GM12878 (cell line): ENCODE measurements at regions of chr2 and their contacts with region 1.

Region 1: DNA sequence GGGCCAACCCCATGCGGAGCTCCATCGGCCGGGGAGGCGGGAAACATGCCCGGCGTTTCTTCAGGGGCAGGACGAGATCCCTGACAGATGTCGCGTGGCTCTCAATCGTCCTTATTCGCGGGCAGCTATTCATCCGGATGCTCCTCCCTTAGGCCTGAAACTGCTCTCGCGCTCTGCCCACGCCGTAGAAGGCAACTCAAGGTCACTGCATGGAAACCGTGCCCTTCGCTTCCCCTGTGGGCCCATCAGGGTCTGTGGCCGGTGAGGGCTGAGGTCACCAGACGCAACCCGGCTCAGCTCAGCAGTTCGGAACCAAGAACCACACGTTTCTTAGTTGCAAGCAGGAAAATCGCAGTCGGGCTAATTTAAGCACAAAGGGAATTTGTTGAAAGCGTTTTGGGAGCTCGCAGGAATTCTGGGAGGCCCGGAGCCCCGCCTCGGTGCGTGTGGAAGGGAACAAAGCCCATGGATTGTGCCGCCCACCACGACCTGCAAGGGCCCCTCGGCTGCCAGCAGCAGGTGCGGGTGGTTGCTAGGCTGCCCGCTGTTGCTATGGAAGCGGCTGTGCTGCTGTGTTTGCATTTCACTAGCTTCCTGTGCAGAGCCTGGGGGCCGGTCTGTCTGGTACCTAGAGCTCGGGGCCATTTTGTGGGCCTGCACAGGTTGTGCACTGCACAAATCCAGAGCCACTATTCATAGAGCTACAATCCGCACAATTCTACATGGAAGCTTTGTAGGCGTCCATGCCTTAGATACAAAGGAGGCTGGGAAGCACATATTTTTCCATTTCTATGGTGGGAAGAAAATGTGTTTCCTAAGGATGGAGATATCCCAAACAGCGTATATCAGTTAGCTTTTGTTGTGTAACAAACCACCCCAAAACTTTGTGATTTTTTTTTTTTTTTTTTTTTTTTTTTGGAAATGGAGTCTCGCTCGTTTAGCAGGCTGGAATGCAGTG is 6.0 kb upstream of the ALLC start:
- DNase-seq: peak; percentile 60
- ATAC-seq: peak; percentile 87
- H3K4me3 ChIP-seq: peak overlapping the region; percentile 26; the same call in 1 of the 2 replicates
- H3K27ac ChIP-seq: peak overlapping the region; percentile 59
- H3K4me1 ChIP-seq: peaks cover 15% of the 10 kb centered on the region
- H3K27me3 ChIP-seq: no peaks in the 10 kb centered on the region
- CTCF ChIP-seq: no peak
- EP300 ChIP-seq: peak in 1 of 2 experiments; percentile 22; a peak in 1 of 4 replicates
- POLR2A ChIP-seq: peak; percentile 46; the same call in 1 of the 2 replicates
- RAD21 ChIP-seq: no peak

Region 2: GRCh38 chr2:3223080-3223923 is 428.7 kb before region 1 on chr2:
- CTCF ChIA-PET with region 1: no interaction called
- POLR2A ChIA-PET with region 1: no interaction called
- RAD21 ChIA-PET with region 1: interaction called, 4 read pairs
- SMC1A ChIA-PET with region 1: no interaction called
- in situ Hi-C with region 1: no loop called
- intact Hi-C with region 1: loop called (anchors 10 kb)
- DNase-seq: peak; percentile 91
- ATAC-seq: peak; percentile 94
- H3K4me3 ChIP-seq: no peak overlapping the region
- H3K27ac ChIP-seq: peak overlapping the region; percentile 89
- H3K4me1 ChIP-seq: peaks cover 20% of the 10 kb centered on the region
- H3K27me3 ChIP-seq: no peaks in the 10 kb centered on the region
- CTCF ChIP-seq: no peak
- EP300 ChIP-seq: peak; percentile 80 to 87; a peak in 3 of 4 replicates
- POLR2A ChIP-seq: peak; percentile 57
- RAD21 ChIP-seq: peak; percentile 12; the same call in 1 of the 2 replicates

Region 3: DNA sequence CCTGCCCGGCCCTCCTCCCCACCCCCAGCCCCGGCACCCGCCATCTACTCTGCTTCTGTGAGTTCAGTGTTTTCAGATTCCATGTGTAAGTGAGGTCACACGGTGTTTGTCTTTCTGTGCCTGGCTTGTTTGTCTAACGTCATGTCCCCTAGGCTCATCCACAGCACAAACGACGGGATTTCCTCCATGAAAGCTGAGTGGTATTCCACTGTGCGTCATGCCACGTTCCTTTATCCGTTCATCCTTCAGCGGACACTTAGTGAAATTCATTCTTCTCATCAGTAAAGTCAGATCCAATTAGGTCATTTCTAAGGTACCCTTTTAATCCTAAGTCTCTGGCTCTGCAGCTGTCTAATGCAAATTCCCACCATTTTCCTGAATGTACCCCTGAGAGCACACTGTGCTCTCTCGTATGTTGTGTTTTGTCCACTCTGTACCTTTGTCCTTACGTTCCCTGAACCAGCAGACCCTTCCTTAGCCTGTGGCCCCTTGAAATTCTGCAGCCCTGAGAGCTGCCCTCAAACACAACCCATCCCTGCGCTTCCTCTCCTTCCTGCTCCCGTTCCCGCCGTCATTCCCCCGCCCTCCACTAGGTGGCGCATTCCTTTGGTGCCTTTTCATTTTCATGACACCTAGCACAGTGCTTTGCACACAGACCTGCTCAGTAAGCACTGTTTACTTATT is 228.3 kb before region 1 on chr2:
- CTCF ChIA-PET with region 1: interaction called, 43 read pairs
- POLR2A ChIA-PET with region 1: no interaction called
- RAD21 ChIA-PET with region 1: interaction called, 9 read pairs
- SMC1A ChIA-PET with region 1: interaction called, 19 read pairs
- in situ Hi-C with region 1: no loop called
- intact Hi-C with region 1: loop called (anchors 1 kb)
- DNase-seq: peak; percentile 8
- ATAC-seq: peak; percentile 89
- H3K4me3 ChIP-seq: no peak overlapping the region
- H3K27ac ChIP-seq: no peak overlapping the region
- H3K4me1 ChIP-seq: peaks cover 12% of the 10 kb centered on the region
- H3K27me3 ChIP-seq: no peaks in the 10 kb centered on the region
- CTCF ChIP-seq: peak; percentile 77 to 99 (median 98)
- EP300 ChIP-seq: no peak
- POLR2A ChIP-seq: no peak
- RAD21 ChIP-seq: peak; percentile 53

Region 4: DNA sequence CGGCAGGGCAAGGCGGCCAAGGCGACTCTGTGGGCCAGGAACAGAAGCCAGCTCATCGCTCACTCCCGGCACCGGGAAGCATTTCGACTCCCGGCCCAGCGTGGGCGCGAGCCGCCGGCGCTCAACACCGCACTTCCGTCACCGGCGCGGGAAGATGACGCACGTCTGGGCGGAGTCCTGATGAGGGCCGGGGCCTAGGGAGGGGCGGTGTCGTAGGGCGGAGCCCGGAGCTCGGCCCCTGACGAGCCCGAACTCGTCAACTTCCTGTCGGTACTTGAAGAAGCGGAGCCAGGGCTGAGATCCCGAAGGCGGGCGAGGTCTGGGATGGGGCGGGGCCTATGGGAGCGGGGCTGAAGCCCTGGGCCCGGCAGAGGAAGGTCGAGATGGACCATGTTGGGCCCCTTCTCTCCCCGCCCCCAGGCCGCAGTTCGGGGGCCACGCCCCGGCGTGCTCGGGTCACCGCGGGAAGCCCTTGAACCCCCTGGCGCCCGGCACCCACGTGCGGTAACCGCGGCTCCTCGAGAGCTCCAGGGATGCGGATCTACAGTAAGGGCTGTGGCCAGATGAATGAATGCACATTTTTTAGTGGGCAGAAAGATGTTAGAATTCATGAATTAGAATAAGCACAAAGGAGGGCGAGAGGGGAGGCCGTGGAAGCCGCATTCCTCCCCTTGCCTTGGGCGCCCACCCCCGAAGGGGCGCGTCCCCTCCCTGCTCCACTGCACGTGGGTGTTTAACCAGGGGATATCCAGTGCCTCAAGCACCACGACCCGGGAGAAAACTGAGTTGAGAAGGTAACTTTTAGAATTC is 93.6 kb before region 1 on chr2 and contains the start of gene RNASEH1:
- CTCF ChIA-PET with region 1: interaction called, 11 read pairs
- POLR2A ChIA-PET with region 1: interaction called, 11 read pairs
- RAD21 ChIA-PET with region 1: interaction called, 14 read pairs
- SMC1A ChIA-PET with region 1: interaction called, 8 read pairs
- in situ Hi-C with region 1: loop called (anchors 5 kb)
- intact Hi-C with region 1: loop called (anchors 1 kb)
- DNase-seq: peak; percentile 85
- ATAC-seq: peak; percentile 95
- H3K4me3 ChIP-seq: peak within 1 kb of the TSS; percentile 78
- H3K27ac ChIP-seq: peak within 1 kb of the TSS; percentile 78
- H3K4me1 ChIP-seq: peaks cover 10% of the 10 kb centered on the region
- H3K27me3 ChIP-seq: no peaks in the 10 kb centered on the region
- CTCF ChIP-seq: no peak
- EP300 ChIP-seq: no peak
- POLR2A ChIP-seq: peak; percentile 94
- RAD21 ChIP-seq: no peak
- polyA plus RNA-seq, gene RNASEH1: 24.6 to 25.7 TPM

Region 5: GRCh38 chr2:3575534-3576262 is 76.3 kb before region 1 on chr2:
- CTCF ChIA-PET with region 1: interaction called, 6 read pairs
- POLR2A ChIA-PET with region 1: no interaction called
- RAD21 ChIA-PET with region 1: interaction called, 9 read pairs
- SMC1A ChIA-PET with region 1: interaction called, 5 read pairs
- in situ Hi-C with region 1: no loop called
- intact Hi-C with region 1: loop called (anchors 1 kb)
- DNase-seq: no peak
- ATAC-seq: peak; percentile 44
- H3K4me3 ChIP-seq: peak overlapping the region; percentile 92
- H3K27ac ChIP-seq: peak overlapping the region; percentile 75
- H3K4me1 ChIP-seq: peaks cover 8% of the 10 kb centered on the region
- H3K27me3 ChIP-seq: no peaks in the 10 kb centered on the region
- CTCF ChIP-seq: no peak
- EP300 ChIP-seq: no peak
- POLR2A ChIP-seq: peak; percentile 7; the same call in 1 of the 2 replicates
- RAD21 ChIP-seq: no peak